CD8-positive, alpha-beta T cell (primary cell): ENCODE measurements at regions of chr10 and their contacts with region 1.

Region 1: DNA sequence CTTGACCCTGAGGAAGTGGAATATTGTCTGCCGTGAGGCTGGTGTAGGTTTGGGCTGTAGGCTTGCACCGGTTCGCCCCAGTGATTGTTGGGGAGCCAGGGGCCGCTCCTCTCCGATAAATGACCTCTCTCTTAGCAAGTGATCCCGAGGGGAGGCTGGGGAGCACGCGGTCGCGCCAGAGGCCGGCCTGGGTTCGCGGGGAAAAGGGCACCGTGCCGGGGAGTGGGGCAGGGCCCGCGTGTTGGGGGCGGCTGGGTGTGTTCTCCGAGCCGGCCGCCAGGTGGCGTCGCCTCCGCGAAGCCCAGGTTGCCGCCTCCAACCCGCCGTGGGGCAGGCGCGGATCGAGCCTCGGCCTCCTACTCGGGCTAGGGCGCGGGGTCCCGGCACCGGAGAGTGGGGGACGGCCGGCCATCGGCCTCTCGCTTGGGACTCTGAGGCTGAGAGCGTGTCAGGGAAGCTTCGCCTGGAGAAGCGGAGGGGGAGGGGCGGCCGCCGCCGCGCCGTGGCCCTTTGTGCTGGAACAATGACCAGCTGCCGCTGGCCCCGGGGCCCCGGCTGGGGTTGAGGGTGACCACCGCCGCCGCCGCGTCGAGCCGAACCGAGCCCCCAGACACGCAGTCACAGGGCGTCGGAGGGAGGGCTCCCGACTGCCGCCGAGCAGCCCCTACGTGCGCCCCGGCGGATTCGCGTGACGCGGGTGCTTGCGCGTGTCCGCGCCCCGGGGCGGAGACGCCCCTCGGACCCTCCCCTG is 442 bp upstream of the LZTS2 start:
- DNase-seq: peak; percentile 64 to 88 (median 77)
- ATAC-seq: peak; percentile 68
- H3K4me3 ChIP-seq: peak overlapping the region; percentile 81 to 97
- H3K4me3 Mint-ChIP-seq: peak overlapping the region; percentile 87
- H3K27ac ChIP-seq: peak overlapping the region; percentile 86 to 88
- H3K27ac Mint-ChIP-seq: peak overlapping the region; percentile 90
- H3K4me1 ChIP-seq: peaks cover 27% of the 10 kb centered on the region
- H3K4me1 Mint-ChIP-seq: peaks cover 23% of the 10 kb centered on the region
- H3K27me3 ChIP-seq: no peaks in the 10 kb centered on the region
- H3K27me3 Mint-ChIP-seq: no peaks in the 10 kb centered on the region
- CTCF ChIP-seq: peak; percentile 84

Region 2: GRCh38 chr10:100554902-100555301 is 444.3 kb before region 1 on chr10:
- CTCF ChIA-PET with region 1: no interaction called
- POLR2A ChIA-PET with region 1: no interaction called
- intact Hi-C with region 1: no loop called
- DNase-seq: no peak
- ATAC-seq: no peak
- H3K4me3 ChIP-seq: no peak overlapping the region
- H3K4me3 Mint-ChIP-seq: no peak overlapping the region
- H3K27ac ChIP-seq: no peak overlapping the region
- H3K27ac Mint-ChIP-seq: no peak overlapping the region
- H3K4me1 ChIP-seq: no peaks in the 10 kb centered on the region
- H3K4me1 Mint-ChIP-seq: no peaks in the 10 kb centered on the region
- H3K27me3 ChIP-seq: no peaks in the 10 kb centered on the region
- H3K27me3 Mint-ChIP-seq: no peaks in the 10 kb centered on the region
- CTCF ChIP-seq: no peak

Region 3: GRCh38 chr10:100902622-100903021 is 96.5 kb before region 1 on chr10:
- CTCF ChIA-PET with region 1: no interaction called
- POLR2A ChIA-PET with region 1: no interaction called
- intact Hi-C with region 1: no loop called
- DNase-seq: no peak
- ATAC-seq: no peak
- H3K4me3 ChIP-seq: no peak overlapping the region
- H3K4me3 Mint-ChIP-seq: no peak overlapping the region
- H3K27ac ChIP-seq: no peak overlapping the region
- H3K27ac Mint-ChIP-seq: no peak overlapping the region
- H3K4me1 ChIP-seq: no peaks in the 10 kb centered on the region
- H3K4me1 Mint-ChIP-seq: peaks cover 4% of the 10 kb centered on the region
- H3K27me3 ChIP-seq: no peaks in the 10 kb centered on the region
- H3K27me3 Mint-ChIP-seq: peaks cover 21% of the 10 kb centered on the region
- CTCF ChIP-seq: no peak

Region 4: DNA sequence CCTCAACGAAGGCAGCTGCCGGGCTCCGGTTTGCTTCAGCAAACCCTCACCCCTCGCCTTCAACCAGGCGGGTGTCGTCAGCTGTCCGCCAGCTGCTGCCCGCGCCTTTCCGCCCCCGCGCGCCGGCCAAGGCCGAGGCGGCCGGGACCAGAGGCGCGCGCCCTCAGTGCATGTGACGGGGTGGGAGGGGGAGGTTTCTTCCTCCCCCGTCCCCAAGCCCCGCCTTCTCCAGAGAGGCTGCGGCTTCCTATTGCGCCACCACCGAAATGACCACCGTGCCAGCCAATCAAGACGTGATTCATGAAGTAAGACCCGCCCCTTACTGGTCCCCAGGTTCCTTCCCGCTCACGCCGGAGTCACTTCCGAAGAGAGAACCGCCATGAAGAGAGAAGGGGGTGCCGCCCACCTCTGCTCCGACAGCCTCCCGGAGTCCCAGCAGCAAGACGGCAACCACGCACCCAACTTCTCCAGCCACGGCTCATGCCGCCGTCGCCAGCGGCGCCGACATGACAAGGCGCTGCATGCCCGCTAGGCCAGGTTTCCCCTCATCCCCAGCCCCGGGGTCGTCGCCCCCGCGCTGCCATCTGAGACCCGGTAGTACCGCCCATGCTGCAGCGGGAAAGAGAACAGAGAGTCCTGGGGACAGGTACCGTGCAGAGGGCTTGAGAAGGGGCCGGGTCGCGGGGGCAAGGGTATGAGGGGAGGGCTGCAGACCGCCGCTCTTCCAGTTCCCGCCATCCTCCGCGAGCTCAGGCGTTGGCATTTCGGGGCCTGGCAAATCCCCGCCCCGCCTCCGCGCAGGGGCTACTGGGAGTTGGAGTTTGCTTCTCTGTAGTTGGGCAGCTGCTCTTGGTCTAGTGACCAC is 86.3 kb before region 1 on chr10 and contains the start of gene SLF2:
- CTCF ChIA-PET with region 1: no interaction called
- POLR2A ChIA-PET with region 1: interaction called, 3 read pairs
- intact Hi-C with region 1: loop called in 1 of 2 experiments (anchors 1 kb)
- DNase-seq: peak; percentile 75 to 96 (median 89)
- ATAC-seq: peak; percentile 84
- H3K4me3 ChIP-seq: peak within 1 kb of the TSS; percentile 98 to 100
- H3K4me3 Mint-ChIP-seq: peak within 1 kb of the TSS; percentile 99
- H3K27ac ChIP-seq: peak within 1 kb of the TSS; percentile 67 to 79
- H3K27ac Mint-ChIP-seq: peak within 1 kb of the TSS; percentile 98
- H3K4me1 ChIP-seq: peaks cover 21% of the 10 kb centered on the region
- H3K4me1 Mint-ChIP-seq: peaks cover 48% of the 10 kb centered on the region
- H3K27me3 ChIP-seq: no peaks in the 10 kb centered on the region
- H3K27me3 Mint-ChIP-seq: no peaks in the 10 kb centered on the region
- CTCF ChIP-seq: no peak
- total RNA-seq, gene SLF2: 8.0 to 8.3 TPM

Region 5: GRCh38 chr10:100986952-100987750 is 12.0 kb before region 1 on chr10 and contains the starts of genes MRPL43 and TWNK:
- CTCF ChIA-PET with region 1: interaction called, 60 read pairs
- POLR2A ChIA-PET with region 1: interaction called, 29 read pairs
- intact Hi-C with region 1: loop called (anchors 1 kb)
- DNase-seq: peak; percentile 68 to 90 (median 87)
- ATAC-seq: peak; percentile 95
- H3K4me3 ChIP-seq: peak within 1 kb of the TSS; percentile 79 to 93
- H3K4me3 Mint-ChIP-seq: peak within 1 kb of the TSS; percentile 99
- H3K27ac ChIP-seq: peak within 1 kb of the TSS; percentile 51 to 64
- H3K27ac Mint-ChIP-seq: peak within 1 kb of the TSS; percentile 95
- H3K4me1 ChIP-seq: peaks cover 35% of the 10 kb centered on the region
- H3K4me1 Mint-ChIP-seq: peaks cover 46% of the 10 kb centered on the region
- H3K27me3 ChIP-seq: no peaks in the 10 kb centered on the region
- H3K27me3 Mint-ChIP-seq: no peaks in the 10 kb centered on the region
- CTCF ChIP-seq: no peak
- total RNA-seq, gene MRPL43: 28.3 to 28.4 TPM
- total RNA-seq, gene TWNK: 4.6 to 4.7 TPM

Region 6: GRCh38 chr10:101018600-101019439 is 19.7 kb after region 1 on chr10:
- CTCF ChIA-PET with region 1: interaction called, 222 read pairs
- POLR2A ChIA-PET with region 1: interaction called, 19 read pairs
- intact Hi-C with region 1: loop called in 1 of 2 experiments (anchors 1 kb)
- DNase-seq: peak; percentile 51 to 79 (median 73)
- ATAC-seq: peak; percentile 78
- H3K4me3 ChIP-seq: no peak overlapping the region
- H3K4me3 Mint-ChIP-seq: no peak overlapping the region
- H3K27ac ChIP-seq: no peak overlapping the region
- H3K27ac Mint-ChIP-seq: no peak overlapping the region
- H3K4me1 ChIP-seq: no peaks in the 10 kb centered on the region
- H3K4me1 Mint-ChIP-seq: peaks cover 4% of the 10 kb centered on the region
- H3K27me3 ChIP-seq: peaks cover 16 to 22% of the 10 kb centered on the region in 2 experiments
- H3K27me3 Mint-ChIP-seq: peaks cover 51% of the 10 kb centered on the region
- CTCF ChIP-seq: peak; percentile 58

Region 7: GRCh38 chr10:101060036-101060950 is 61.1 kb after region 1 on chr10:
- CTCF ChIA-PET with region 1: no interaction called
- POLR2A ChIA-PET with region 1: no interaction called
- intact Hi-C with region 1: loop called (anchors 1 to 2 kb)
- DNase-seq: peak; percentile 80 to 96 (median 91)
- ATAC-seq: peak; percentile 67
- H3K4me3 ChIP-seq: peak overlapping the region; percentile 85 to 94
- H3K4me3 Mint-ChIP-seq: peak overlapping the region; percentile 98
- H3K27ac ChIP-seq: peak overlapping the region; percentile 55 to 92
- H3K27ac Mint-ChIP-seq: peak overlapping the region; percentile 91
- H3K4me1 ChIP-seq: peaks cover 27% of the 10 kb centered on the region
- H3K4me1 Mint-ChIP-seq: peaks cover 27% of the 10 kb centered on the region
- H3K27me3 ChIP-seq: peaks cover 20 to 27% of the 10 kb centered on the region in 2 experiments
- H3K27me3 Mint-ChIP-seq: peaks cover 18% of the 10 kb centered on the region
- CTCF ChIP-seq: peak; percentile 95

Region 8: GRCh38 chr10:102055647-102056419 is 1056.7 kb after region 1 on chr10 and contains the start of gene ARMH3:
- CTCF ChIA-PET with region 1: no interaction called
- POLR2A ChIA-PET with region 1: no interaction called
- intact Hi-C with region 1: loop called in 1 of 2 experiments (anchors 5 kb)
- DNase-seq: peak; percentile 75 to 95 (median 87)
- ATAC-seq: peak; percentile 93
- H3K4me3 ChIP-seq: peak within 1 kb of the TSS; percentile 93 to 94
- H3K4me3 Mint-ChIP-seq: peak within 1 kb of the TSS; percentile 97
- H3K27ac ChIP-seq: peak within 1 kb of the TSS; percentile 79 to 90
- H3K27ac Mint-ChIP-seq: peak within 1 kb of the TSS; percentile 95
- H3K4me1 ChIP-seq: peaks cover 40% of the 10 kb centered on the region
- H3K4me1 Mint-ChIP-seq: peaks cover 42% of the 10 kb centered on the region
- H3K27me3 ChIP-seq: no peaks in the 10 kb centered on the region
- H3K27me3 Mint-ChIP-seq: no peaks in the 10 kb centered on the region
- CTCF ChIP-seq: no peak
- total RNA-seq, gene ARMH3: 18.6 to 20.6 TPM